ENCODE measurements at regions of chr20 and their contacts with region 1.

Region 1: DNA sequence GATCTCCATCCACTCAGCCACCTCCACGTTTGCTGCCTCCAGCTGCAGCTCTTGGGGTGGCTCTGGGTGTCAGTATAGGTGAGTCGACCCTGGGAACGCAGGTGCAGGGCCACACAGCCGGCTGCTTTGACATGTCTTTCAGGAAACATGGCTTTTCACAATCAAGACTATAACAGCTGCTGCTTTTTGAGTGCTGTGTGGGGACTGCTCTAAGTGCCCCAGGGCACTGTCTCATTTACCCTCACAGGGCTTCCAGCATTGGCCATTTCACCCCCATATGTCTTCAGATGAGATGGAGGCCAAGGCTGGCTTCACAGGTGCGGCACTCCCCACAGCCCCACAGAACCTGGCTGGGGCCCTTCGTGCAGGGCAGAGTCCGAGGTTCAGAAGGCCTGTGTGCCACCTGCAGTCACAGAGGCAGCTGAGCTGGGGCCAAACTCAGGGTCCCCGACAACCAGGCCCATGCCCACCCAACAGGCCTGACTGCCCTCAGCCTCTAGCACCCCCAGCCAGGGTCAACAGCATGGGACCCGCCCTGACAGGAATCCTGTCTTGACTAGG is 14.9 kb upstream of the CST7 start:
- DNase-seq: peak; percentile 3
- H3K4me3 Mint-ChIP-seq: no peak overlapping the region
- H3K27ac Mint-ChIP-seq: no peak overlapping the region
- H3K4me1 Mint-ChIP-seq: peaks cover 24% of the 10 kb centered on the region
- H3K27me3 Mint-ChIP-seq: no peaks in the 10 kb centered on the region

Region 2: GRCh38 chr20:24955045-24955444 is 20.9 kb after region 1 on chr20:
- CTCF ChIA-PET with region 1: interaction called, 10 read pairs
- POLR2A ChIA-PET with region 1: no interaction called
- DNase-seq: peak; percentile 61
- H3K4me3 Mint-ChIP-seq: no peak overlapping the region
- H3K27ac Mint-ChIP-seq: peak overlapping the region; percentile 88
- H3K4me1 Mint-ChIP-seq: peaks cover 52% of the 10 kb centered on the region
- H3K27me3 Mint-ChIP-seq: no peaks in the 10 kb centered on the region

Region 3: GRCh38 chr20:24994470-24995368 is 60.5 kb after region 1 on chr20:
- CTCF ChIA-PET with region 1: no interaction called
- POLR2A ChIA-PET with region 1: no interaction called
- DNase-seq: peak; percentile 88
- H3K4me3 Mint-ChIP-seq: no peak overlapping the region
- H3K27ac Mint-ChIP-seq: peak overlapping the region; percentile 5
- H3K4me1 Mint-ChIP-seq: peaks cover 38% of the 10 kb centered on the region
- H3K27me3 Mint-ChIP-seq: peaks cover 11% of the 10 kb centered on the region

Region 4: GRCh38 chr20:25042531-25043498 is 108.6 kb after region 1 on chr20:
- CTCF ChIA-PET with region 1: no interaction called
- POLR2A ChIA-PET with region 1: no interaction called
- DNase-seq: peak; percentile 75
- H3K4me3 Mint-ChIP-seq: peak overlapping the region; percentile 54
- H3K27ac Mint-ChIP-seq: peak overlapping the region; percentile 98
- H3K4me1 Mint-ChIP-seq: peaks cover 39% of the 10 kb centered on the region
- H3K27me3 Mint-ChIP-seq: no peaks in the 10 kb centered on the region